Activated naive CD4-positive, alpha-beta T cell treated with anti-CD3 and anti-CD28 coated beads for 36 hours (primary cell): ENCODE measurements at regions of chr4 and their contacts with region 1.

Region 1: DNA sequence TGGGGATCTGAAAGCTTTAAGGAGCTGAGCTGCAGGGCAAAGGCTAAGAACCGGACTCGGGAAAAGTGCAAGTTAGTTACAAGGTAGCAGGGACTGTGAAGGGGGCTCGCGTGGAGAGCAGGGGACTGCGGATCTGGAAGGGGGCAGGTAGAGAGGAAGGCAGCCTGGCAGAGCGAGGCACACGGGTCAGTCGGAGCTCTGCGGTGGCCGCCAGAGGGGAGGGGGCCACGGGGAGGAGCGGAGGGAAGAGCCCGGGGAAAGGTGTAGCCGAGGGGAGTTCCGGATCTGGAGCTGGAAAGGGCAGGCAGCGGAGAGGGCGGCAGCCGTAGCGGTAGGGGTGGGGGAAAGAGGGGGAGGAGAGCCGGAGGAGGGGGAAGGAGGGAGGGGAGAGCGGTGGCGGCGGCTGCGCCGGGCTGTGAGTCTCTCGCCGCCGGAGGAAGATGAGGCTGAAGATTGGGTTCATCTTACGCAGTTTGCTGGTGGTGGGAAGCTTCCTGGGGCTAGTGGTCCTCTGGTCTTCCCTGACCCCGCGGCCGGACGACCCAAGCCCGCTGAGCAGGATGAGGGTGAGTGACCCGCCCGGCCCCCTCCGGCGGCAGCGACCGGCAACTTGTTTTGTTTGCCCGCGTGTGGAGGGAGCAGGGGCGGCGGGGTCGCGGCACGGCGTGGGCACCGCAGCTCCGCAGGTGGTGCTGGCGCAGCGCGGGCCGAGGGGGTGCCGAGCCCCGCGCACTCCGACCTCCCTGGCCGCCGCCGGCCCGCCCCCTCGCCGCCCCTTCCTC is at the start of gene GALNT7:
- DNase-seq: peak; percentile 70
- H3K4me3 Mint-ChIP-seq: peak within 1 kb of the TSS; percentile 94
- H3K27ac Mint-ChIP-seq: peak within 1 kb of the TSS; percentile 83
- H3K4me1 Mint-ChIP-seq: peaks cover 38% of the 10 kb centered on the region
- H3K27me3 Mint-ChIP-seq: no peaks in the 10 kb centered on the region
- total RNA-seq, gene GALNT7: 8.5 to 11.1 TPM

Region 2: DNA sequence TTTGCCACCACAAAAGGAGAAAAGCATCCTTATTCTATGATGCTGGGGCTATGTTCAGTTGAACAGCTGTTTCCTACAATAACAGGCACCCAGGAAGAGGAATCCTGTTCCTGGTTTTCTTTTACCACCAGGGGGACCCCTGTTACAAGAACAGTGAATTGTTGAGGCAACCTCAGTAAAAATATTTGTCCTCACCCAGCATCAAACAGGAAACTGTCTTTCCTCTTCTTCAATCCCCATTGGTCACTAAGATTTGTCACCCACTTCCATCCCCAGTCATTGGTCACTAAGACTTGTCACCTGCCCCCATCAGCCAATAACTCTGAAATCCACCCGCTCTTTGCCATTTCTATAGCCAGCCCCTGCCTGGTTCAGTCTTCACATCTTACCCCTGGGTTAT is 143.5 kb before region 1 on chr4:
- CTCF ChIA-PET with region 1: interaction called, 11 read pairs
- intact Hi-C with region 1: loop called (anchors 1 kb)
- DNase-seq: peak; percentile 43
- H3K4me3 Mint-ChIP-seq: no peak overlapping the region
- H3K27ac Mint-ChIP-seq: no peak overlapping the region
- H3K4me1 Mint-ChIP-seq: peaks cover 4% of the 10 kb centered on the region
- H3K27me3 Mint-ChIP-seq: no peaks in the 10 kb centered on the region

Region 3: GRCh38 chr4:173181769-173182354 is 13.3 kb after region 1 on chr4:
- CTCF ChIA-PET with region 1: interaction called, 3 read pairs
- intact Hi-C with region 1: loop called (anchors 1 kb)
- DNase-seq: no peak
- H3K4me3 Mint-ChIP-seq: no peak overlapping the region
- H3K27ac Mint-ChIP-seq: no peak overlapping the region
- H3K4me1 Mint-ChIP-seq: peaks cover 37% of the 10 kb centered on the region
- H3K27me3 Mint-ChIP-seq: no peaks in the 10 kb centered on the region

Region 4: DNA sequence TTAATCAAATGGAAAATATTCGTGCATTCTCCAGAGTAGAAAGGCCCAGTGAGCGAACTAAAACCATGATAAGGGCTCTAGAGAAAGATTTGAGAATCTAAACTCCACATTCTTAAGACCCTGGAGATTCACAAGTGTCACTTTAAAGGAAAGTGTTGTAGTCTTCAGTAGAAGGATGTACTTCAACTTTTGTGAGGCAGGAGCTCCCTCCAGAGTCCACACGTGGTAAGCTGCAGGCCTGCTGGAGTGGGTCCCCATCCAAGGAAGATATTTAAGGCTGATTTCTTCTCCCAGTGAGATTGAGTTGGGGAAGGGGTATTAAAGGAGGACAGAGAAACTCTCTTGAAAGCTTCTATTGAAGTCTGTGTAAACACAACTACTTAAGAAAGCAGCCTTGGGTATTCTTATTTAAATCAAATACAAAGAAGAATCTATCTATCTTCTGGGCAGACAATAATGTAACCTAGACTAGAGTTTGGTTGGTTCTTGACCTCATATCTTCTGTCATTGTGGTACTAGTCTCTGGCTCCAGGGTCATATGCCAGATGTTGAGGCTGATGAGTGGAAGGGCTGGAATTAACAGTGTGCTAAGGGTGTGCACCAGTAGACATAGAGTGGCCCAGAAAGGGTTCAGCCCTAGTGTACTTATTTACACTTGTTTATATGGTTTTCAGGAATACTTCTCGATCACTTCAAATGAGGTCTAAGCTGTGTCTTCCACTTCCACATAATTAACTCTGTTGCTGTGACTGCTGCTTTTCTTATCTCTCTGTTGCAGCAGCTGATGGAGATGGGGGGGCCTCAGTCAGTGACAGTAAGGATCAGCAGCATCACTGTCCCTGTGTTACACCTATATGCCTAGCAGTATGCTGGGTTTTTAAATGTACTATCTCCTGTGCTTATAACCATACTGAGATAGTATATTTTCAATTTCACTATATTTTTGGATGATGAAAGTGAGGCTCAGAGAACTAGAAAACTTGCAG is 89.4 kb after region 1 on chr4:
- CTCF ChIA-PET with region 1: interaction called, 3 read pairs
- intact Hi-C with region 1: loop called (anchors 1 kb)
- DNase-seq: peak; percentile 77
- H3K4me3 Mint-ChIP-seq: no peak overlapping the region
- H3K27ac Mint-ChIP-seq: no peak overlapping the region
- H3K4me1 Mint-ChIP-seq: peaks cover 8% of the 10 kb centered on the region
- H3K27me3 Mint-ChIP-seq: no peaks in the 10 kb centered on the region

Region 5: DNA sequence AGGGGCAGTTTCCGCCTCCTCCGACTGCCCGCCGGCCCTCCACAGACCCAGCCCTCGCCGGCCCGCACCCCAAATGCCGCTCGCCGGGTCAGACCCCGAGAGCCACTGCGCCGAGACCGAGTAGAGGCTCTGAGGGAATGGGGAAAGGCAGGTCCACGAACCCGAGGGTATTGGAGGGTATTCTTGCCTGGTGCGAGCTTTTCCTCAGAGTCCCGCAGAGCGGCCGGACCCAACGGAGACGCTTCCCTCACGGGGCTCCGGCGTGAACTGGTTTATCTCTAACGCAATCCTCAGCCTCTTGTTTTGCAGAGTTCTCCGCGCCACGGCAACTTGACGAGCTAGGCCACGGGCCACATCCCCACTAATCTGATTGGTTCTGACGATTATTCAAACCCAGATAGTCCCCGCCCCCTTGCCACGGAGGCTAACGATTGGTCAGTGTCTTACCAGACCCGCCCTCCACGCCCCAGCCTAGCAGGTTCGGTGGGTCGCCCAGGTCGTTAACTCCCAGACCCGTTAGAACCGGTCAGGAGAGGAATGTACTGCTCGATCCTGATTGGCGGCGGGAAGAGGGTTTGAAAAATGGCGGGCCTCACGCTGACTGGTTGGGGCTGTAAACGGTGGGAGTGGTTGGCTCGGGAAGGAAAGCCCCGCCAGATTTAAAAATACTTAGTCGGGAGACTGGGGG is 165.6 kb after region 1 on chr4 and contains the start of gene HMGB2:
- CTCF ChIA-PET with region 1: no interaction called
- intact Hi-C with region 1: loop called (anchors 1 kb)
- DNase-seq: peak; percentile 100
- H3K4me3 Mint-ChIP-seq: peak within 1 kb of the TSS; percentile 99
- H3K27ac Mint-ChIP-seq: peak within 1 kb of the TSS; percentile 99
- H3K4me1 Mint-ChIP-seq: peaks cover 15% of the 10 kb centered on the region
- H3K27me3 Mint-ChIP-seq: peaks cover 12% of the 10 kb centered on the region
- total RNA-seq, gene HMGB2: 752 to 787 TPM

Region 6: GRCh38 chr4:173370477-173371291 is 202.1 kb after region 1 on chr4 and contains the start of gene SAP30:
- CTCF ChIA-PET with region 1: no interaction called
- intact Hi-C with region 1: loop called (anchors 1 kb)
- DNase-seq: peak; percentile 98
- H3K4me3 Mint-ChIP-seq: peak within 1 kb of the TSS; percentile 99
- H3K27ac Mint-ChIP-seq: peak within 1 kb of the TSS; percentile 99
- H3K4me1 Mint-ChIP-seq: peaks cover 18% of the 10 kb centered on the region
- H3K27me3 Mint-ChIP-seq: peaks cover 20% of the 10 kb centered on the region
- total RNA-seq, gene SAP30: 9.2 to 9.7 TPM

Region 7: DNA sequence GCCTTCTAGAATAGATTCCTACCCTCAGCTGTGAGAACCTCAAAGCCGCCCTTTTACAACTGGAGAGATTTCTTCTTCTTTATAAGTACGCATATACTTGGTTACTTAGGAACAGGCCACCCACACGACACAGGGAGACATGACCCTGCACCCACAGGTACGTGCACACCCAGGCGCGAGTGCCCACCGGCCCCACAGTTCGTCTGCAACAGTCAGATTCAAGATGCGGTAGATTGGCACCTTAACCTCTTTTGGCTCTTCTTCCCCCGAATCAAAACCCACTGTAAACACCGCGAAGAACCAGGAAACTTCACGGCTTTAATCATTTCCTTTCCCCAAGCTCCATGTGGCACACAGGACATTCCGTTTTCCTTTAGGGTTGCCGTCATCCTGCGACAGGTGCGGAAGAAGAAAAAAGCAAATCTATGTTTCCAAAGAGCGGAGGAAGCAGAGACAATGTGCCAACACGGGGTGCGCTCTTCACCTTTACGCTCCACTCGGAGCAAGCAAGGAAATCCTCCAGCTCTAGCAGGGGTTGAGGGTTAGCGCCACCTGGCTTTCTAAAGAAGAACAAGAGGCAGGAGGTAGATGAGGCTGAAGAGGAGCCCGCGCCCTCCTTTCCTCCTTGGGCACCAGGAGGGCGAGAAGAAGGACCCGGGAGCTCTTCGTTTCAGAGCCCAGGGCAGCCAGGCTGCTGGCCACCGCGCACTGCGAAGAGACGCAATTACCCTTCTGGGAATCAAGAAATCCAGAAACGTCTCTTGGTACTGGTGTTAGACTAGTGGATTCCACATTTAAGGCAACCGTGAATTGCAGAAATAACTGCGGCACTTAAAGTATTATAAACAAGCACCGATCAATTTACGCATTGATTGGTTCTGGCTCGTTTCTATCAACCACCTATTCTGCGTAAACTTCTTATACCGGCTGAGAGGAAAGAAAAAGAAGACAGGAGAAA is 325.7 kb after region 1 on chr4:
- CTCF ChIA-PET with region 1: no interaction called
- intact Hi-C with region 1: loop called (anchors 5 kb)
- DNase-seq: peak; percentile 75
- H3K4me3 Mint-ChIP-seq: peak overlapping the region; percentile 64
- H3K27ac Mint-ChIP-seq: no peak overlapping the region
- H3K4me1 Mint-ChIP-seq: peaks cover 10% of the 10 kb centered on the region
- H3K27me3 Mint-ChIP-seq: peaks cover 32% of the 10 kb centered on the region